Activated CD4-positive, alpha-beta T cell treated with anti-CD3 and anti-CD28 coated beads for 36 hours (primary cell): ENCODE measurements at regions of chr3 and their contacts with region 1.

Region 1: DNA sequence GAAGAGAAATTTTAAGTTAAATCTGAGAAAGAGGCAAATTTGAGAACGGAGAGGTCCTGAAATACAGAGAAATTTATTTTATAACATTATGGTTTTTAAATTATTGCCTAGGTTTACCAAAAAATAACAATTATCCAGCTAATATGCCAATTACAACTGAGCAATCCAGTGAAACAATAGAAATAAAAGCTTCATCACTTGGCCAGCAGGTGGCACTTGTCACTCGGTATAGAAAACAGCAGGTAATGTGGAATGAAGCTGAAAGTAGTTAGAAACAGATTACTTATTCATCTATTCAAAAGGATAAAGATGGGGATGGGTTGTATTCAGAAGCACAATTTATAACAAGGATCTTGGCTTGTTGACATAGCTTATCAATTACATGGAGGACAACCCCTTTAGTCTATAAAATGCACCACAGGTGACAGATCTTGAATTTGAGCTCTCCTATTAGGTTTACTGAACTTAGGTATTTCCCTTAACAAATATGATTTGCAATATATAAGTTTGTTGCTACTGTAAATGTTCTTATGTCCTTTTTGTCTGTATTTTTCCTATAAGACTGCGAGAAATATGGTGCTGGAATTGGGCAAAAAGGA is 70.1 kb upstream of the GUCA1C start:
- DNase-seq: peak; percentile 63
- ATAC-seq: no peak
- H3K4me3 Mint-ChIP-seq: no peak overlapping the region
- H3K27ac Mint-ChIP-seq: no peak overlapping the region
- H3K4me1 Mint-ChIP-seq: no peaks in the 10 kb centered on the region
- H3K27me3 Mint-ChIP-seq: peaks cover 4% of the 10 kb centered on the region

Region 2: DNA sequence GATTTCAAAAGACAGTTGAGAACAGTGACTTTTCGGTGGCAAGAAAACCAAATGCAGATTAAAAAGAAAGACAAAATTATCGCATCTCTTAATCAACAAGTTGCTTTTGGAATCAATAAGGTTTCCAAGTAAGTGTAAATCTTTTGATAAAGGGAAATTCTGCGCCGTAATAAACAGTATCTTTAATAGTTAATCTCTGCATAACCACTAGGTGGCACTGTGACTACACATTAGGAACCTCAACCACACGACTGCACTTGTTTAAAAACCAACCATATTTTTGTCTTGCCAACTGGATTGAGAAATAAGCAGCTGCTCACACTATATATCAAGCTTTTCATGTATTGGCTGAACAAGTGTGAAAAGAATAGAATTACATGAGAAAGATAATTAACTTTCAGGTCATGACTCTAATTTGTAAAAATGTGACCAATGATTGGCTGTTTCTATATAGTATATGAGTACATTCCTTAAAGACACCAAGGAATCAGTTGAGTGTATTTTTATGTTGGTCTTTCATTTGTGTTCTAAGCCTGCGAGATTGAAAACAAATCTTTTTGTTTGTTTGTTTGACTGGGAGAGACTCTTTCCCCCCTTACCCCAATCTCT is 361.5 kb before region 1 on chr3:
- CTCF ChIA-PET with region 1: no interaction called
- POLR2A ChIA-PET with region 1: no interaction called
- intact Hi-C with region 1: loop called (anchors 5 kb)
- DNase-seq: peak; percentile 63
- ATAC-seq: peak; percentile 69
- H3K4me3 Mint-ChIP-seq: no peak overlapping the region
- H3K27ac Mint-ChIP-seq: peak overlapping the region; percentile 6
- H3K4me1 Mint-ChIP-seq: peaks cover 15% of the 10 kb centered on the region
- H3K27me3 Mint-ChIP-seq: no peaks in the 10 kb centered on the region

Region 3: DNA sequence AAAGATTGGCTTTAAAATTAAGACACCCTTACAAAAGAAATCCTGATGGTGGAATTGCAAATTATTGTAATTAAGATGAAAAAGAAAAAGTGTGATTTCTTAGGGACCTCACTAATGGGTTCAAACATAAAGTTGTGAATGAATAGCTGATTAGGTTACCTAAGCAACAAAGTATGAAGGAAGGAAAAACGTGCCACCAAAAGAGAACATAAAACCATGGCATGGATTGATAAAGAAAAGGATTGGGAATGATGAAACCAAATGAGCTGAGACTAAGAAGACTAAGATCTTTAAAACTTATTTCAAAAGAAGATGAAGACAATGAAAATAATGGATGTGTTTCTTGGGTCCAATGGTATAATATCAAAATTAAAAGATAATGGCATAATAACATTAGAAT is 37.9 kb before region 1 on chr3:
- CTCF ChIA-PET with region 1: interaction called, 14 read pairs
- POLR2A ChIA-PET with region 1: no interaction called
- intact Hi-C with region 1: no loop called
- DNase-seq: no peak
- ATAC-seq: no peak
- H3K4me3 Mint-ChIP-seq: no peak overlapping the region
- H3K27ac Mint-ChIP-seq: no peak overlapping the region
- H3K4me1 Mint-ChIP-seq: no peaks in the 10 kb centered on the region
- H3K27me3 Mint-ChIP-seq: peaks cover 18% of the 10 kb centered on the region

Region 4: GRCh38 chr3:109005443-109005842 is 18.3 kb before region 1 on chr3:
- CTCF ChIA-PET with region 1: interaction called, 17 read pairs
- POLR2A ChIA-PET with region 1: no interaction called
- intact Hi-C with region 1: no loop called
- DNase-seq: no peak
- ATAC-seq: no peak
- H3K4me3 Mint-ChIP-seq: no peak overlapping the region
- H3K27ac Mint-ChIP-seq: no peak overlapping the region
- H3K4me1 Mint-ChIP-seq: no peaks in the 10 kb centered on the region
- H3K27me3 Mint-ChIP-seq: peaks cover 4% of the 10 kb centered on the region

Region 5: GRCh38 chr3:109045271-109046040 is 21.7 kb after region 1 on chr3:
- CTCF ChIA-PET with region 1: interaction called, 10 read pairs
- POLR2A ChIA-PET with region 1: no interaction called
- intact Hi-C with region 1: no loop called
- DNase-seq: no peak
- ATAC-seq: no peak
- H3K4me3 Mint-ChIP-seq: no peak overlapping the region
- H3K27ac Mint-ChIP-seq: no peak overlapping the region
- H3K4me1 Mint-ChIP-seq: no peaks in the 10 kb centered on the region
- H3K27me3 Mint-ChIP-seq: no peaks in the 10 kb centered on the region

Region 6: GRCh38 chr3:109081746-109082510 is 58.2 kb after region 1 on chr3:
- CTCF ChIA-PET with region 1: interaction called, 71 read pairs
- POLR2A ChIA-PET with region 1: no interaction called
- intact Hi-C with region 1: loop called (anchors 1 kb)
- DNase-seq: peak; percentile 46
- ATAC-seq: peak; percentile 47
- H3K4me3 Mint-ChIP-seq: no peak overlapping the region
- H3K27ac Mint-ChIP-seq: no peak overlapping the region
- H3K4me1 Mint-ChIP-seq: no peaks in the 10 kb centered on the region
- H3K27me3 Mint-ChIP-seq: peaks cover 13% of the 10 kb centered on the region

Region 7: DNA sequence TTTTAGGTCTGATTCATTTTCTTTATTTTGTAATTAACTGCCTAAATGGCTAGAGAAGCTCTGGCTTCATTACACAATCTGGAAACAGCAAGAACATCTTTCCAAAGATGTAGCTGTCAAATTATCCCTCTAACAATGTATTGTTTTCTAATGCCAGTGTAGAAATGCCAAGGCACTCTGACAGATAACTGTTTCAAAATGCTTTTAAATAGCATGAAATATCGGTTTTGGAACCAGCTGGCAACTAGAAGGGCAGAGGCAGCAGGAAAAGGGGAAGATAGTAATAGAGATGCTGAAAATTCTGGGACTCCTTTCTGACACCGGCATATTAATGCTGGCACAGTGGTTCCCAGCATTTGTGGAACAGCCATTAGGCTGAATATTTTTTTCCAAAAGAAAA is 68.1 kb after region 1 on chr3:
- CTCF ChIA-PET with region 1: interaction called, 11 read pairs
- POLR2A ChIA-PET with region 1: no interaction called
- intact Hi-C with region 1: no loop called
- DNase-seq: no peak
- ATAC-seq: no peak
- H3K4me3 Mint-ChIP-seq: no peak overlapping the region
- H3K27ac Mint-ChIP-seq: no peak overlapping the region
- H3K4me1 Mint-ChIP-seq: no peaks in the 10 kb centered on the region
- H3K27me3 Mint-ChIP-seq: peaks cover 3% of the 10 kb centered on the region

Region 8: DNA sequence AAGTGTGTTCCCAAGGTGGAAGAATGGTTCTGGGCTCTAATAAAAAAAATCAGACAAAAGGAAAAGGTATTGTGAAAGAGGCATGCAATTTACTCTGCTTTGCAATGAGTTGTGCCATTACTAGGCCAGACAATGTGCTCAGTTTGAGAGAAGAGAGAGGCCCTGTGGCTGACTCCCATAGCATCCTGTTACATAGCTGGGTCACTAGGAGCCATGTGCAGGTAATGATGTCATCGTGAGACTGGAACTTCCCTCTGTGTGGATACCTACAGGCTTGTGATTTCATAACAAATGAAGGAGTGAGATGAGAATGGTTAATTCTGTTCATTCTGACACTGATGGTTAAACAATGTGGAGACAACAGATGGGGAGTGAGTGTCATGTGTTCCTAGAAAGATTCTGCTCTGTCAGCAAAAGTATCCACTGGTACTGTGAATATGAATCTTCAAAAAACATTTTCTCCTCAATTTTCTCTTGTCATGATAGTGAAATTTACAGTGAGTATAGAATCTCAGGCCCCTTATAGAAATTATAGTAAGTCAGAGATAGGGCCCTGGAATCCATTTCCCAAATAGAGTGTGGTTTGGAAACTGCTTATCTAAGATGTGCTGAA is 962.3 kb after region 1 on chr3:
- CTCF ChIA-PET with region 1: no interaction called
- POLR2A ChIA-PET with region 1: no interaction called
- intact Hi-C with region 1: no loop called
- DNase-seq: no peak
- ATAC-seq: no peak
- H3K4me3 Mint-ChIP-seq: no peak overlapping the region
- H3K27ac Mint-ChIP-seq: no peak overlapping the region
- H3K4me1 Mint-ChIP-seq: no peaks in the 10 kb centered on the region
- H3K27me3 Mint-ChIP-seq: no peaks in the 10 kb centered on the region